Calu3 (cell line): ENCODE measurements at regions of chrX and their contacts with region 1.

Region 1: GRCh38 chrX:53683556-53684414 is 2.7 kb downstream of the HUWE1 start:
- DNase-seq: peak; percentile 92
- H3K4me3 Mint-ChIP-seq: peak overlapping the region; percentile 93
- H3K27ac Mint-ChIP-seq: peak overlapping the region; percentile 99
- H3K4me1 Mint-ChIP-seq: peaks cover 20% of the 10 kb centered on the region
- H3K27me3 Mint-ChIP-seq: no peaks in the 10 kb centered on the region
- CTCF ChIP-seq: no peak

Region 2: GRCh38 chrX:53714580-53715345 is 31.0 kb after region 1 on chrX:
- CTCF ChIA-PET with region 1: interaction called, 11 read pairs
- intact Hi-C with region 1: loop called (anchors 2 kb)
- DNase-seq: peak; percentile 75
- H3K4me3 Mint-ChIP-seq: peak overlapping the region; percentile 64
- H3K27ac Mint-ChIP-seq: peak overlapping the region; percentile 93
- H3K4me1 Mint-ChIP-seq: peaks cover 48% of the 10 kb centered on the region
- H3K27me3 Mint-ChIP-seq: no peaks in the 10 kb centered on the region
- CTCF ChIP-seq: no peak

Region 3: DNA sequence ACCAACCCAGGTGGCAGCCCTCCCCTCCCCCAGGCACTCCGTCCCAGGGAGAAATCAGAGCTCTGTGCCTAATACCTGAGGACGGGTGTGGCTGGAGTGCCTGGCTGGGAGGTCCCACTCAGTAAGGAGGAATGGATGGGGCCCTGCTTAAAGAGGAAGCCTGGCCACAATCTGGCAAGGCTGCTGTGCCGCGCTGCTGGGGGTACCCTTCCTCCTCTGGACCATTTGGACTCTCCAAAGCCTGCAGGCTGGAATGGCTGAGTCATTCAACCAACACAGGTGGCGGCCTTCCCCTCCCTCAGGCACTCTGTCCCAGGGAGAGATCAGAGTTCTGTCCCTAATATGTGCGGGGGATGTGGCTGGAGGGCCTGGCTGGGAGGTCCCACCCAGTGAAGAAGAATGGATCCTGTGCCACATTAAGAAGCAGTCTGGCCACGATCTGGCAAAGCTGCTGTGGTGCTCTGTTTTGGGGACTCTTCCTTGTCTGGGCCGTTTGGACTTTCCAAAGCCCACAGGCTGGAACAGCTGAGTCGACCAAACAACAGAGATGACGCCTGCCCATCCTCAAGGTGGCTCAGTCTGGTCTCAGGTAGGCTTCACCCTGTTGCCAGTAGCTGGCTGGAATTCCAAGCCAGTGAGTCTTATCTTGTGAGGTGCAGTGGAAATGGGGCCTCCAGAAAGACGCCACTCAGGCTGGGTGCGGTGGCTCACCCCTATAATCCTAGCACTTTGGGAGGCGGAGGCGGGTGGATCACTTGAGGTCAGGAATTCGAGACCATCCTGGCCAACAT is 130.1 kb after region 1 on chrX:
- CTCF ChIA-PET with region 1: no interaction called
- intact Hi-C with region 1: loop called (anchors 1 kb)
- DNase-seq: peak; percentile 52
- H3K4me3 Mint-ChIP-seq: no peak overlapping the region
- H3K27ac Mint-ChIP-seq: no peak overlapping the region
- H3K4me1 Mint-ChIP-seq: peaks cover 15% of the 10 kb centered on the region
- H3K27me3 Mint-ChIP-seq: no peaks in the 10 kb centered on the region
- CTCF ChIP-seq: no peak

Region 4: GRCh38 chrX:53831662-53832635 is 148.2 kb after region 1 on chrX:
- CTCF ChIA-PET with region 1: no interaction called
- intact Hi-C with region 1: loop called (anchors 2 kb)
- DNase-seq: peak; percentile 65
- H3K4me3 Mint-ChIP-seq: no peak overlapping the region
- H3K27ac Mint-ChIP-seq: no peak overlapping the region
- H3K4me1 Mint-ChIP-seq: no peaks in the 10 kb centered on the region
- H3K27me3 Mint-ChIP-seq: no peaks in the 10 kb centered on the region
- CTCF ChIP-seq: peak; percentile 34